ENCODE measurements at regions of chr13 and their contacts with region 1.

Region 1: DNA sequence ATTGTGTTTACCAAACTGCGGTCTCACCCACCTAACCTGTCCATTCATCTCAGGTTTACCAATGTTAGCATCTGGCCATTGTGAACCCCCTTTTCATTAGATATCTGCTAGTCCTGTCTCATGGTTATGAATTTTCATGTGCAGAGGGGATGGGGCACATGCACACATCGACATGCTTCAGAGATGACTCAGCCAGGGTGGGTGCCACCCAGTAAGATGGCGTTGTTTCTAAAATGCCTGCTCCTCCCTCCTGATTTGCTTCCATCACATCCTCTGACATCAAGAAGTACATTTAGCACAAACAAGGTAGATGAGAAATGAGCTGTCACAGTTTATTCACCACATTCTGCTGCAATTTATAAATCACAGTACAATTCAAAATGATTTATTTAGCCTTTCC is 51.3 kb downstream of the GPALPP1 start:
- DNase-seq: no peak
- ATAC-seq: no peak
- H3K4me3 ChIP-seq: no peak overlapping the region
- H3K4me3 Mint-ChIP-seq: no peak overlapping the region
- H3K27ac ChIP-seq: no peak overlapping the region
- H3K27ac Mint-ChIP-seq: no peak overlapping the region
- H3K4me1 ChIP-seq: no peaks in the 10 kb centered on the region
- H3K4me1 Mint-ChIP-seq: no peaks in the 10 kb centered on the region
- H3K27me3 ChIP-seq: no peaks in the 10 kb centered on the region
- H3K27me3 Mint-ChIP-seq: peaks cover 5% of the 10 kb centered on the region
- CTCF ChIP-seq: no peak

Region 2: DNA sequence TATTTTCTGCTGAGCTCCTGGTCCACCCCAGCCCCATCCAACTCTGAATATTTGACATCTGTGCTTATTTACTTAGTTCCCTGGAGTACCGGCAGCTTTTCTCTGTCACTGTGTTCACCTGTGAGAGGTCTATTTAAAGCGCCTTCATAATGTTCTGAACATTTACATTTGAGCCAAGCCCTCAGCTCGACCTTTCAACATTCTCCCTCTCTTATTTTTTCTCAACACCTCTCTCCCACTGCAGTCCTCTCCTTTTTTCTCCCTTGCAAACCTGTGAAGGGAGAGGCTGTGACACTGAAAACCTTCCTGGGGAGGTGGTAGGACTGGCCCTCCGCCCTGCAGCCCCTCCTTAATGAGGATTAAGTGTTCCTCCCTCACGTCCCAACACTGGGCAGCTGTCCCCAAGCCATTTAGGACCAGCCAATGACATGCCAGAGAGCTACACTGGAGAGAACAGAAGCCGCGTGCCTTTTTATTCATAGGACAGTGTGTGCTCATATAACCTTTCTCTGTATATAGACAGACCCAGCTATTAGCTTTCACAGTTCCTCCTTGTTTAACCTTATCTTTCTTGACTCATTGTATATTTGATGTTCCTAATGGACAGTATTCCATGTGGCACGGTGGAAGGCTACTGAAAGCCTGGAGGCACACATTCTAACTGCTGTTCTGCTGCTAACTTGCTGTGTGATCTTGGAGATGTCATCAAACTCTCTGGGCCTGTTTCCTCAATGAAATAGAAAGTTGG is 186.1 kb before region 1 on chr13:
- CTCF ChIA-PET with region 1: no interaction called
- POLR2A ChIA-PET with region 1: no interaction called
- intact Hi-C with region 1: no loop called
- DNase-seq: no peak
- ATAC-seq: no peak
- H3K4me3 ChIP-seq: no peak overlapping the region
- H3K4me3 Mint-ChIP-seq: no peak overlapping the region
- H3K27ac ChIP-seq: no peak overlapping the region
- H3K27ac Mint-ChIP-seq: no peak overlapping the region
- H3K4me1 ChIP-seq: no peaks in the 10 kb centered on the region
- H3K4me1 Mint-ChIP-seq: no peaks in the 10 kb centered on the region
- H3K27me3 ChIP-seq: peaks cover 0 to 6% (median 1%) of the 10 kb centered on the region in 4 experiments
- H3K27me3 Mint-ChIP-seq: peaks cover 24% of the 10 kb centered on the region
- CTCF ChIP-seq: no peak

Region 3: GRCh38 chr13:45280751-45281634 is 240.4 kb after region 1 on chr13:
- CTCF ChIA-PET with region 1: interaction called, 15 read pairs
- POLR2A ChIA-PET with region 1: no interaction called
- intact Hi-C with region 1: no loop called
- DNase-seq: peak; percentile 52
- ATAC-seq: peak; percentile 76
- H3K4me3 ChIP-seq: no peak overlapping the region
- H3K4me3 Mint-ChIP-seq: no peak overlapping the region
- H3K27ac ChIP-seq: no peak overlapping the region
- H3K27ac Mint-ChIP-seq: no peak overlapping the region
- H3K4me1 ChIP-seq: peaks cover 3 to 7% of the 10 kb centered on the region in 2 donors
- H3K4me1 Mint-ChIP-seq: peaks cover 14% of the 10 kb centered on the region
- H3K27me3 ChIP-seq: no peaks in the 10 kb centered on the region
- H3K27me3 Mint-ChIP-seq: no peaks in the 10 kb centered on the region
- CTCF ChIP-seq: peak; percentile 48

Region 4: GRCh38 chr13:45310341-45311125 is 269.9 kb after region 1 on chr13:
- CTCF ChIA-PET with region 1: interaction called, 97 read pairs
- POLR2A ChIA-PET with region 1: no interaction called
- intact Hi-C with region 1: no loop called
- DNase-seq: no peak
- ATAC-seq: no peak
- H3K4me3 ChIP-seq: peak overlapping the region in 3 of 5 experiments; percentile 53 to 69 (median 57)
- H3K4me3 Mint-ChIP-seq: peak overlapping the region; percentile 84
- H3K27ac ChIP-seq: no peak overlapping the region
- H3K27ac Mint-ChIP-seq: no peak overlapping the region
- H3K4me1 ChIP-seq: peaks cover 11 to 16% of the 10 kb centered on the region in 2 donors
- H3K4me1 Mint-ChIP-seq: peaks cover 17% of the 10 kb centered on the region
- H3K27me3 ChIP-seq: peaks cover 0 to 21% (median 13%) of the 10 kb centered on the region in 4 experiments
- H3K27me3 Mint-ChIP-seq: peaks cover 34% of the 10 kb centered on the region
- CTCF ChIP-seq: no peak